Activated CD8-positive, alpha-beta memory T cell treated with anti-CD3 and anti-CD28 coated beads, Interleukin-2, amount 10 ng/mL, durations not matched to agents 7 days and 5 days (primary cell): ENCODE measurements at regions of chr11 and their contacts with region 1.

Region 1: GRCh38 chr11:73350908-73351636 is 25.1 kb upstream of the RELT start:
- DNase-seq: peak; percentile 76
- ATAC-seq: peak; percentile 76
- H3K4me3 Mint-ChIP-seq: no peak overlapping the region
- H3K27ac Mint-ChIP-seq: no peak overlapping the region
- H3K4me1 Mint-ChIP-seq: peaks cover 18% of the 10 kb centered on the region
- H3K27me3 Mint-ChIP-seq: no peaks in the 10 kb centered on the region

Region 2: DNA sequence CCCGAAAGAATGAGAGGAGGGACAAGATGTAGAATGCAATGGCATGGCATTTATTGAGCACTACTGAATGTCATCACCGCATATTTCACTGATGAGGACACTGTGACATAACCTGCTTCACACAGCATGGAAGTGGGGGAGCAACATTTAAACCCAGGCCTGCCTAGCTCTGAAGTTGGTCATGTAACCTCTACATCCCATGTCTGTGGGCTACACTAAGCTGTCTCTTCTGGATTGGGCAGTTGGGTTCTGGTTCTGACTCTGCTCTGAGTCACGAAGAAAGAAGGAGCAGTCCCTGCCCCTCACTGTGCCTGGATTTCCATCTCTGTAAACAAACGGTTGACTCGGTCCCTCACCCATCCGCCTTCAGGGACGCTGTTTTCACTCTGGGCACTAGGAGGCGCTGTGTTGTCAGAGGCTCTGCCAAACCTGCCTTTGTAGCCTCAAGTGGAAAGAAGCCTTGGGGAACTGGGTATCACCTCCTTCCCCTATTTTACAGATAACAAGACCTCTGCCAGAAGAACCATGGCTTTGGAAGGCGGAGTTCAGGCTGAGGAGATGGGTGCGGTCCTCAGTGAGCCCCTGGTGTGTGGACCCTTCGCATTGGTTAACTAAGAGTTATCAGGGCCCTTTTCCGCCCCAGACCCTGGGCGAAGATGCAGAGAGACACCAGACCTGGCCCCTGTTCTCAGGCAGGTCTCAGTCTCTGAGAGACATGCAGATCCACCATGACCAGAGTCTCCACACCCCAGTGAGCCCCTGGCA is 55.7 kb before region 1 on chr11:
- CTCF ChIA-PET with region 1: interaction called, 10 read pairs
- DNase-seq: peak; percentile 86
- ATAC-seq: peak; percentile 84
- H3K4me3 Mint-ChIP-seq: no peak overlapping the region
- H3K27ac Mint-ChIP-seq: no peak overlapping the region
- H3K4me1 Mint-ChIP-seq: no peaks in the 10 kb centered on the region
- H3K27me3 Mint-ChIP-seq: no peaks in the 10 kb centered on the region

Region 3: DNA sequence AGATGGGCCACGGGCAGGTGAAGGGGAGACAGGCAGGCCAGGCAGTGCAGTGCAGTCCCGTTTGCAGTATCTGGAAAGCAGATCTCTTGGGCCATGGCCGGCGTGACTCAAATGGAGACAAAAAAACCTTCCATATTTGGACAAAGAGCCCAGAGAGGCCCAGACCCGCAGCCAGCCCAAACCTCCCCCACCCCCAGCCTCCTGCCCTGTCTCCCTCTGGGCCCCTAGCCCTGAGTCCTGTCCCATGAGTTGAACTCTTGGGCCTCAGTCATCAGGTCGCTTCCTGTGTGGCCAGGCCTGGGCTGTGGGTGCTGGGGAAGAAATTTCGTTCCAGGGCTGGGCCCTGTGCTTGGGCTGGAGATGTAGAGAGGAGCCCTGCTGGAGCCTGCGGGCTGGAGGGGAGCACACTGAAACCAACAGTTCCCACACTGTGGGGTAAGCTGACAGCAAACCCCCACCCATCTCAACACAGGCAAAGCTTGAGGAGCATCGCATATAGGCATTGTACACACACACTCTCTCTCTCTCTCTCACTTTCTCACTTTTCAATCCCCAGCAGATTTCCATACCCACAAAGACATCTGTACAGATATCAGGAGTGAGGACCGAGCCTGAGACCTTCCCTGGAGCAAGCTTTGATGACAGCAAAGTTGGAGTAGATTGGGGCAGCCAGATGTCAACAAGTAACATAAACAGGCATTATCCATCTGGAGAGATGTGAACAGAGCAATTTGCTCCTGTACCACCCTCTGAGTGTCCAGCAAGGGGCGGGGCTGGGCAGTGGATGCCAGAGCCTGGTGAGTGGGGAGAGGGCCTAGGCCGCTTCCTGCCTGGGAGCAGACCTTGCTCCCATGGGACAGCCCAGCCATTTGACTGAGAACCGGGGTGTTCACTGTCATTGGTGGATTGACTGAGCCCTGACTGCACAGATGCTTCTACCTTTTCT is 25.8 kb before region 1 on chr11:
- CTCF ChIA-PET with region 1: interaction called, 10 read pairs
- DNase-seq: no peak
- ATAC-seq: peak; percentile 28
- H3K4me3 Mint-ChIP-seq: no peak overlapping the region
- H3K27ac Mint-ChIP-seq: no peak overlapping the region
- H3K4me1 Mint-ChIP-seq: peaks cover 19% of the 10 kb centered on the region
- H3K27me3 Mint-ChIP-seq: no peaks in the 10 kb centered on the region

Region 4: GRCh38 chr11:73366265-73366610 is 15.2 kb after region 1 on chr11:
- CTCF ChIA-PET with region 1: interaction called, 27 read pairs
- DNase-seq: peak; percentile 60
- ATAC-seq: peak; percentile 88
- H3K4me3 Mint-ChIP-seq: peak overlapping the region; percentile 37
- H3K27ac Mint-ChIP-seq: peak overlapping the region; percentile 83
- H3K4me1 Mint-ChIP-seq: peaks cover 25% of the 10 kb centered on the region
- H3K27me3 Mint-ChIP-seq: no peaks in the 10 kb centered on the region

Region 5: GRCh38 chr11:73384872-73385689 is 34.0 kb after region 1 on chr11:
- CTCF ChIA-PET with region 1: interaction called, 43 read pairs
- DNase-seq: peak; percentile 68
- ATAC-seq: peak; percentile 52
- H3K4me3 Mint-ChIP-seq: peak overlapping the region; percentile 10
- H3K27ac Mint-ChIP-seq: peak overlapping the region; percentile 85
- H3K4me1 Mint-ChIP-seq: peaks cover 69% of the 10 kb centered on the region
- H3K27me3 Mint-ChIP-seq: no peaks in the 10 kb centered on the region

Region 6: GRCh38 chr11:73402834-73403185 is 51.7 kb after region 1 on chr11:
- CTCF ChIA-PET with region 1: interaction called, 66 read pairs
- DNase-seq: no peak
- ATAC-seq: no peak
- H3K4me3 Mint-ChIP-seq: no peak overlapping the region
- H3K27ac Mint-ChIP-seq: peak overlapping the region; percentile 28
- H3K4me1 Mint-ChIP-seq: peaks cover 3% of the 10 kb centered on the region
- H3K27me3 Mint-ChIP-seq: no peaks in the 10 kb centered on the region

Region 7: DNA sequence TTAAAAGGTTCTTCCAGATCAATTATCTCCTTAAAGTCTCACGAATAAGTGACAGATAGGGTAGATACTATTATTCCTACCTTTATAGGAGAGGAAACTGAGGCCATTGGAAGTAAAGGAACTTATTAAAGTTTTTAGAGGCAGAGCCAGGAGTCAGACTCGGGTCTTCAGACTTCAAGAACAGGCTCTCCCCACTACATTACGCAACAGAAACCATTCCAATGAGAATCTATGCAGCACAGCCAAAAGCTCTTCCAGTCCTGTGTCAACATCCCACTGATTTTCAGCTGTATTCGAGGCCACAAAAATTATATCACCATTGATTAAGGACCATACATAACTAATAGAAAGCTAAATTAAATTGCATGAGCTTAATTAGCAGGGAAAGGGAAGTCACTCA is 102.5 kb after region 1 on chr11:
- CTCF ChIA-PET with region 1: no interaction called
- DNase-seq: no peak
- ATAC-seq: no peak
- H3K4me3 Mint-ChIP-seq: no peak overlapping the region
- H3K27ac Mint-ChIP-seq: no peak overlapping the region
- H3K4me1 Mint-ChIP-seq: no peaks in the 10 kb centered on the region
- H3K27me3 Mint-ChIP-seq: no peaks in the 10 kb centered on the region

Region 8: DNA sequence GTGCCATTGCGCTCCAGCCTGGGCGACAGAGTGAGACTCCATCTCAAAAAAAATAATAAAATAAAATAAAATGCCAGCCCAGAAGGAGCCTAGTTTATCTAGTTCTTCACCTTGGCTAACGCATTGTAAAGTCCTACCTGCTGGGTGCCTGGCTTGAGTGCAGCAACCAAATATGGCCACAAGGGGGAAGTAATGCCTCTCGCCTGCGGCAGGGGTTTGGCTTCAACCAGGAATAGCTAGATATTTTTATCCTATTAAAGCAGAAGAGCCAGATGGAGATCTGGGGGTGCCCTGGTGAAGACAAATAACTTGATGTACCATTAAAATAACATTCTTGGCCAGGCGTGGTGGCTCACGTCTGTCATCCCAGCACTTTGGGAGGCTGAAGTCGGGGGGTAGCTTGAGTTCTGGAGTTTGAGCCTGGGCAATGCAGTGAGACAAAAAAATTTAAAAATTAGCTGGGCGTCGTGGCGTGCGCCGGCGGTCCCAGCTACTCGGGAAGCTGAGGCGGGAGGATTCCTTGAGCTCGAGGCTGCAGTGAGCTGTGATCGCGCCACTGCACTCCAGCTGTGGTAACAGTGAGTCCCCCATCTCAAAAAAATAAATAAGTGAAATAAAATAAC is 274.7 kb after region 1 on chr11:
- CTCF ChIA-PET with region 1: interaction called, 11 read pairs
- DNase-seq: peak; percentile 73
- ATAC-seq: peak; percentile 73
- H3K4me3 Mint-ChIP-seq: no peak overlapping the region
- H3K27ac Mint-ChIP-seq: no peak overlapping the region
- H3K4me1 Mint-ChIP-seq: no peaks in the 10 kb centered on the region
- H3K27me3 Mint-ChIP-seq: peaks cover 28% of the 10 kb centered on the region